ENCODE measurements at regions of chr12 and their contacts with region 1.

Region 1: DNA sequence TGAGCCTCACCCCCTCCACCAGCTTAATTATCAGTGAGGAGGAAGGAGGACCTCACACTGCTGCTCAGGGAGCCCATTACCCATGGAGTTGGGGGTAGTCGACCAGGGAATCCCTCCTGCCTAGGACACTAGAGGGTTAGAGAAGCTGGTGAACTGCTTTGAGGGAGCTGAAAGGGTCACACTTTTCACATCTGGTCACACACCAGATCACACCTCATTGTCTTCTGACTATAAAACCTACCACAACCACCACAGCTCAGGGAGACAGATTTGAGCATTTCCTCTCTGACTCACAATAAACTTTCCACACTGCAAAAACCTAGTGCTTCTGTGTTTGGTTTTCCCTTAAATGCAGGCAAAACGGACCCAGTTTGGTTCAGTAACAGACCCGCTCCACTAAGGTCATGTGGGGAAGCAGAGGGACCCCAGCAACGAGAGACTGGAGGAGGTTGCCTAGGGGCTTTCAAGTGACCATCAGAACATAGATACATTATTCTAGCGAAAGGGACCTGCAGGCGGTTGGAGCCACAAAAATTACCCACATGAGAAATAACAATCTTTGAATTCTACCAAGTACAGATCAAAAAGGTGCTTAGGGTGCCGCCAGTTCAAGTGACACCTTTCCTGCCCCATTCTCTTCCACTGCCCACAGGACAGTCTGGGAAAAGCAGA is 151.4 kb upstream of the AVPR1A start:
- DNase-seq: no peak

Region 2: DNA sequence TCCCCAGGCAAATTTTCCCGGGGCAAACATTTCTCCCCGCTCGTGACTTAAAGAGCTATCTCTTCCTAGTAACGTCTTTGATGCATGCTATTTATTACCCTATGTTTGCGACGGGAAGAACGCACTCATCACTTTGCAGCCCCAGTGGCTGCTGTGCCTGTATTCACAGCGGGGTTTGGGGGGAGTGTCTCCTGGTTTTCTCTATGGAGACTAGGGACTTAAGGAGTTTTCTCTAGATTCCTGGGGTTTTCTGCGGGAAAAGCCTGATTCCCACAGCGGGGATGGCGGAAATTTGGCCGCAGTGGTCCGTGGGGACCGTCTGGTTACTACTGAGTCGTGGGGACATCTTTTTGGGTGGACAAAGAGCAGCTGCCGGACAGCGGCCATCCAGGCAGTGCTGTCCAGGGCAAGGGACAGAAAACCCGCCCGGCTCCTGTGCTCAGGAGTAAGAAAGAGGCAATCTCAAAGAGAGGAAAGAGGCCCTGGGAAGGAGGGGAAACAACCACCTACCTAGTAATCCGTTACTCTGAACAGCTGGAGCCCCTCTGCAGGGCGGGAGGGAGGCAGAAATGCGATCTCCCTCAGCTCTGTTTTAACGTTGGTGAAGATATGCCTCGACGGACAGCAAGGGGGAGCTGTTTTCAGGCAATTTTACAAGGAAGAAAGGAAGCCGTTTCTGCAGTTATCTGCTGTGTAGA is 150.6 kb before region 1 on chr12:
- intact Hi-C with region 1: loop called (anchors 10 kb)
- DNase-seq: peak; percentile 71